HepG2 (cell line): ENCODE measurements at regions of chr2 and their contacts with region 1.

Region 1: DNA sequence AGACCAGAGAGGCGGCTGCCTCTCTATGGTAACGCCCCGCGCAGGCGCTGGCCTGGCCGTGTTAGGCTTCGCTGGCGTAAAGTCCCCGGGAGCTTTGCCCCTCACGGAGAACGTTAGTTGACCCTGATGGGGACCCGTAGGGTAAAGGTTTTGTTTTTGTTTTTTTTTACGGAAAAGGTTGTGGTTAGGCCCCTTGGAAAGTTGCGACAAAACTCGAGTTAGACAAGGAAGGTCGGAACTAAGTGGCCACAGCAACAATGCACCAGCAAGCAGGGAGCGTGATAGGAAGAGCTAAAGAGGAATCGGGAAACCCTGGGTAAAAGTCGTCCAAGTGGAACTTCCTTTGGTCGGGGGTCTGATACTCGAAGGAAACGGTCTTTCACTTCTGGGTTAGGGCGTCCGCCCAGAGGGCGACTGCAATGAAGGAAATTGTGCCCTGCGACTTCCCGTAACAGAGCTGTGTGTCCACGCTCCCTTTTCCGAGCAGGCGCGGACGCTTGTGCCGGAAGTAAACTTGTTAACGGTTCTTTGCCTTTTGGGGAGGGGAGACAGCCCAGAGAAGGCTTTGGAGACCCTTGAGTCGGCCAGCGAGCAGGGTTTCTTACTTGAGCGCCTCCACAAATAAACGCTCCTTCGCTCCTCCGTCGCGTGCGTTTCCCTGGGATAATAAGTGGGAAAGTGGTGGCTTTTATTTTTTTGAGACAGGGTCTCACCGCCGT is 493 bp upstream of the CLASP1 start:
- DNase-seq: peak; percentile 98
- ATAC-seq: peak; percentile 96
- H3K4me3 ChIP-seq: peak overlapping the region; percentile 71 to 96 (median 95)
- H3K27ac ChIP-seq: peak overlapping the region; percentile 99
- H3K4me1 ChIP-seq: peaks cover 53% of the 10 kb centered on the region
- H3K27me3 ChIP-seq: no peaks in the 10 kb centered on the region; a peak in 2 of 5 replicates
- CTCF ChIP-seq: no peak; the same call in 1 of the 2 replicates
- EP300 ChIP-seq: 0 out of 4 replicates have a peak, but pooled peaks have one; percentile 14 to 28
- POLR2A ChIP-seq: peak; percentile 66 to 92
- RAD21 ChIP-seq: peak; percentile 20; the same call in 1 of the 2 replicates

Region 2: GRCh38 chr2:121442889-121443288 is 206.9 kb before region 1 on chr2:
- CTCF ChIA-PET with region 1: no interaction called
- POLR2A ChIA-PET with region 1: no interaction called
- in situ Hi-C with region 1: no loop called
- intact Hi-C with region 1: no loop called
- DNase-seq: no peak
- ATAC-seq: no peak
- H3K4me3 ChIP-seq: no peak overlapping the region
- H3K27ac ChIP-seq: no peak overlapping the region
- H3K4me1 ChIP-seq: no peaks in the 10 kb centered on the region
- H3K27me3 ChIP-seq: no peaks in the 10 kb centered on the region
- CTCF ChIP-seq: no peak
- EP300 ChIP-seq: no peak
- POLR2A ChIP-seq: no peak
- RAD21 ChIP-seq: no peak

Region 3: DNA sequence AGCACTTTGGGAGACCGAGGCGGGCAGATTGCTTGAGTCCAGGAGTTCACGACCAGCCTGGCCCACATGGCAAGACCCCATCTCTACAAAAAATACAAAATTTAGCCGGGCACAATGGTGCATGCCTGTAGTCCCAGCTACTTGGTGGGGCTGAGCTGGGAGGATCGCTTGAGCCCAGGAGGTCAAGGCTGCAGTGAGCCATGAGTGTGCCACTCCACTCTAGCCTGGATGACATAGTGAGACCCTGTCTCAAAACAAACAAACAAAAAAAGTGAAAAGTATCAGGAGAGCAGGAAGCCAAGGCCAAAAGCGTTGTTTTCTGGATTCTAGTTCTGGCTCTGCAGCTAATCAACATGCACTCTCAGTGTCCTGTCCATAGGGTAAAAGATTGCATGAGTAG is 10.2 kb after region 1 on chr2:
- CTCF ChIA-PET with region 1: no interaction called
- POLR2A ChIA-PET with region 1: interaction called, 36 read pairs
- in situ Hi-C with region 1: no loop called
- intact Hi-C with region 1: no loop called
- DNase-seq: peak; percentile 25
- ATAC-seq: peak; percentile 91
- H3K4me3 ChIP-seq: no peak overlapping the region
- H3K27ac ChIP-seq: peak overlapping the region; percentile 17
- H3K4me1 ChIP-seq: peaks cover 12% of the 10 kb centered on the region
- H3K27me3 ChIP-seq: no peaks in the 10 kb centered on the region
- CTCF ChIP-seq: no peak
- EP300 ChIP-seq: peak in 1 of 2 experiments; percentile 17; a peak in 1 of 4 replicates
- POLR2A ChIP-seq: no peak
- RAD21 ChIP-seq: no peak

Region 4: DNA sequence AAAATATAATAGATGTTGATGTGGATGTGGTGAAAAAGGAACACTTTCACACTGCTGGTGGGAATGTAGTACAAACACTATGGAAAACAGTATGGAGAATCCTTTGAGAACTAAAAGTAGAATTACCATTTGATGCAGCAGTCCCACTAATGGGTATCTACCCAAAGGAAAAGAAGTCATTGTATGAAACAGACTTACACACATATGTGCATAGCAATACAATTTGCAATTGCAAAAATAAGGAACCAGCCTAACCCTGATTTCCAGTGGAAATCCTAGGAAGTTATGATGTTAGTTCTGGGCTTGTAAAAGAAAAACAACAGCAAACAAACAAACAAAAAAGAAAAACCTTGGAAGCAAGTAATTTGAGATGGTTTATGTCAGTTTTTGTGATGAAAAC is 28.1 kb after region 1 on chr2:
- CTCF ChIA-PET with region 1: no interaction called
- POLR2A ChIA-PET with region 1: interaction called, 10 read pairs
- in situ Hi-C with region 1: no loop called
- intact Hi-C with region 1: no loop called
- DNase-seq: no peak
- ATAC-seq: no peak
- H3K4me3 ChIP-seq: no peak overlapping the region
- H3K27ac ChIP-seq: no peak overlapping the region
- H3K4me1 ChIP-seq: no peaks in the 10 kb centered on the region
- H3K27me3 ChIP-seq: no peaks in the 10 kb centered on the region
- CTCF ChIP-seq: no peak
- EP300 ChIP-seq: no peak
- POLR2A ChIP-seq: no peak
- RAD21 ChIP-seq: no peak

Region 5: DNA sequence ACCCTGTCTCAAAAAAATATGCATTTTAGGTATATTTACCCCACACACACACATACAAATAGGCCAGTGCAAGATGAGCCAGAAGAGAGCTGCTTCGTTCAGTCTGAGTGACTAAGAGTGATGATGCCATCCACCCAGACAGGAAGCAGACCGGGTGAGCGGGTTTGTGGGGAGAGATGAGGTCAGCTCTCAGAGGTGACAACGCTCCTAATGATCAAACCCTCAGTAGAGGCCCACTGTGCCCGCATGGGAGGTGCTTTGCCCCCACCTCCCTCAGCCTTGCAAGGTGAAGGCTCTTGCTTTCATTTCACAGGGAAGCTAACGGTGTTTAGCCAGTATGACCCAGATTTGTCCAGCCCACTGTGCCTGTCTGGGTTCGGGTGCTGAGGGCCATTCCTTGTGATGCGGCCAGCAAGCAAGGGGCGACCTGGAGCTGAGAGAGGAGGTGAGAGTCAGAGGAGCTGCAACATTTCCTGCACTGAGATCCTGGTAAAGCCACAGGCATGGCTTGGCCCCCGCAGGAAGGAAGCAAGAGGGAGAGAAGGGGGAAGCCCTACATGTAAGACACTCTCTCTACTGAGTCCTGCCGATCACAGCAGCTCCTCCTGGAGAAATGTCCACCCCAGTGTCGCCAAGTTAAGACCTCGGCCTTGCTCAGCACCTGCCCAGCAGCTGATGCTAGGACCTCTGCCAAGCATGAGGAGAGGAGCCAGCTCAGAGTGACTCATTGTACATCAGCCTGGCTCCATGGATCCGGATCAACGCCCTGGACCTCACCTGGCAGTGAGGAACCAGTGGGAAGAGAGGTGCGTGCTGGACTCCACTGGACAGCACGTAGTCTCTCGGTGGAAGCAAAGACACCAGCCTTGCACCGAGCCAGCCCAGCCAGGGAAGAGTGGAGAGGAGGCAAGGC is 49.9 kb after region 1 on chr2:
- CTCF ChIA-PET with region 1: no interaction called
- POLR2A ChIA-PET with region 1: interaction called, 34 read pairs
- in situ Hi-C with region 1: no loop called
- intact Hi-C with region 1: no loop called
- DNase-seq: peak; percentile 52
- ATAC-seq: peak; percentile 75
- H3K4me3 ChIP-seq: peak overlapping the region; percentile 33 to 67 (median 41)
- H3K27ac ChIP-seq: no peak overlapping the region
- H3K4me1 ChIP-seq: peaks cover 54% of the 10 kb centered on the region
- H3K27me3 ChIP-seq: no peaks in the 10 kb centered on the region; a peak in 1 of 5 replicates
- CTCF ChIP-seq: no peak
- EP300 ChIP-seq: no peak
- POLR2A ChIP-seq: no peak
- RAD21 ChIP-seq: no peak

Region 6: DNA sequence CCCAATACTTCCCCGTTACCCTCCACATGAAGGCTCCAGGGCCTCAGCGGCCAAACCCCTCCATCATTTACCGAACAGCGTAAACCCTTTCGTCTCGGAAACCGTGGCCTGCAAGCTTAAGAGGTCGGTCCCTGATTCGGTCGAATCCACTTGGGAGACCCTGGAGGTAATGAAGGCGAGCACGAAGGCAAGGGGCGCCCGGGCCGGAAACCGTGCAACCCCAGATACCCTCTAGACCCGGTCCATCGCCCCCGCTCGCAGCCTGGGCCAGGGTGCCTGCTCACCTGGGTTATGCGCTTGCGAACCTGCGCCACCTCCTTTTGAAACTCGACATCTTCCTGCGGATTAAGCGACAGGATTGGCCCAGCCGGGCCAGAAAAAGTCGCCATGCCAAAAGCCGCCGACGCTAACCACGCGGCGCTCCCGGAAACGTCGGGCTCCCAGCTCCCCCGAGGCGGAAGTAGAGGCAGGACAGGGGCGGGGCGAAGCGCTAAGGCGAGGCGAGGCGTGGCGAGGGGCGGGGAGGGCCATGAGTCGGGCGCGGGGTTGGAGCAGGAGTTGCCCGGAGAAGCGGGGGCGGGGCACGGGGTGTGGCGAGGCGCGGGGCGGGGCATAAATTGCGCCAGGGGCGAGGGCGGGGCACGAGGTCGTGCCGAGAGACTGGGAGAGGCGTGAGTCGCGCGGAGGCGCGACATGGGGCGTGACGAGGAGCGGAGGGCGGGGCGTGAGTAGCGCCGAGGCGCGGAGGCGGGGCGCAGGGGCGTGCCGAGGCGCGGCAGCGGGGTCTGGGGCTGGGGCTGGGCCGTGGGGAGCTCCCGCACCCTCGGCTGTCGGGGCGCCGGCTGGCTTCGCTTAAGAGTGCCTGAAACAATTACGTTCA is 86.9 kb after region 1 on chr2 and contains the start of gene NIFK:
- CTCF ChIA-PET with region 1: no interaction called
- POLR2A ChIA-PET with region 1: interaction called, 25 read pairs
- in situ Hi-C with region 1: no loop called
- intact Hi-C with region 1: no loop called
- DNase-seq: peak; percentile 96
- ATAC-seq: peak; percentile 95
- H3K4me3 ChIP-seq: peak within 1 kb of the TSS; percentile 87 to 100 (median 91)
- H3K27ac ChIP-seq: peak within 1 kb of the TSS; percentile 66
- H3K4me1 ChIP-seq: peaks cover 27% of the 10 kb centered on the region
- H3K27me3 ChIP-seq: peaks cover 2 to 25% of the 10 kb centered on the region in 2 experiments; a peak in 2 of 5 replicates
- CTCF ChIP-seq: no peak; the same call in none of the 2 replicates
- EP300 ChIP-seq: peak in 1 of 2 experiments; percentile 7; a peak in 1 of 4 replicates
- POLR2A ChIP-seq: peak; percentile 75 to 84
- RAD21 ChIP-seq: peak; percentile 37
- total RNA-seq, gene NIFK: 105 and 178 TPM in 2 replicates